OCI-LY7 (cell line): ENCODE measurements at regions of chr3 and their contacts with region 1.

Region 1: GRCh38 chr3:127590593-127591477 is at the start of gene TPRA1:
- DNase-seq: peak; percentile 98
- H3K4me3 ChIP-seq: peak within 1 kb of the TSS; percentile 85
- H3K27ac ChIP-seq: peak within 1 kb of the TSS; percentile 83
- H3K4me1 ChIP-seq: peaks cover 43% of the 10 kb centered on the region
- CTCF ChIP-seq: peak; percentile 57
- total RNA-seq, gene TPRA1: 25.6 and 32.3 TPM in 2 replicates

Region 2: DNA sequence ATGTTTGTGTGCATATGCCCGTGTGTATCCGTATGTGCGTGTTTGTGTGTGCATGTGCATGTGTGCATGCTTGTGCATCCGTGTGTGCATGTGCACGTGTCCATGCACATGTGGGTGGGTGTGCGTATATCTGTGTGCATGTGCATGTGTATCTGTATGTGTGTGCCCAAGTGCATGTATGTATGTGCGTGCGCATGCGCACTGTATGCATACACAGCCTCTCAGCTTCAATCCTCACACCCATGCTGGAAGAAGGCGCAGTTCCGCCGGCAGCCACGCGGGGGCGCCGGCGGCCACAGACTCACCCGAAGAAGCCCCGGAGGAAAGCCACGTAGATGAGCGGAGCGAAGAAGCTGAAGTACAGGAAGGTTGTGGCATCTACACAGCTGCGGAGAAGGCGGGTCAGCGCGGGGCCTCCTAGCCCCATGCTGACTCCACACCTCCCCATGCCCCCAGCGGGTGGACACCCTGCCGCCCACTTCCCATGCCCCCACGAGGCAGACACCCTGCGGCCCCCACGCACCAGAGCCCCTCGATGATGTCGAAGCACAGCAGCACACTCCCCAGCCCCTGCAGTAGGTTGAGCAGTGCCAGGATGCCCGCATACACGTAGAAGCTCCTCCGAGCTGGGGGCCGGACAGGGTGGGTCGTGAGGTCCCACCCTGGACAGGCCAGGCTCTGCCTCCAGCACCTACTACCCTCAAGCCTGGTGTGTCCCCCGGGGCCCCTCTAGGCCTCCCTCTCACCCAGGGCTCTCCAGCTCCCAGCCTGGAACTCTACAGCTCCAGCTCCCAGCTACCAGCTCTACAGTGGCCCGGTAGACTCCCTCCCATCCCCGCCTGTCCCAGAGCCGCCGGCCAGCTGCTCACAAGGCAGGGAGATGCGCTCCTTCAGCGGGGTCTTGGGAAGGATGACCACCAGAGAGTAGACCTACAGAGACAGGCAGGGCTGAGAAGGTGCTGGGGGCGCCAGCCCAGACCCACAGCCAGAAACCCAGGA is 15.7 kb before region 1 on chr3:
- CTCF ChIA-PET with region 1: no interaction called
- POLR2A ChIA-PET with region 1: no interaction called
- intact Hi-C with region 1: no loop called
- DNase-seq: peak; percentile 89
- H3K4me3 ChIP-seq: no peak overlapping the region
- H3K27ac ChIP-seq: no peak overlapping the region
- H3K4me1 ChIP-seq: no peaks in the 10 kb centered on the region
- CTCF ChIP-seq: peak; percentile 94

Region 3: GRCh38 chr3:128051837-128052594 is 461.2 kb after region 1 on chr3 and contains the start of gene SEC61A1:
- CTCF ChIA-PET with region 1: no interaction called
- POLR2A ChIA-PET with region 1: no interaction called
- intact Hi-C with region 1: loop called (anchors 5 kb)
- DNase-seq: peak; percentile 96
- H3K4me3 ChIP-seq: peak within 1 kb of the TSS; percentile 88
- H3K27ac ChIP-seq: peak within 1 kb of the TSS; percentile 57
- H3K4me1 ChIP-seq: peaks cover 31% of the 10 kb centered on the region
- CTCF ChIP-seq: no peak
- total RNA-seq, gene SEC61A1: 72.9 and 85.2 TPM in 2 replicates

Region 4: DNA sequence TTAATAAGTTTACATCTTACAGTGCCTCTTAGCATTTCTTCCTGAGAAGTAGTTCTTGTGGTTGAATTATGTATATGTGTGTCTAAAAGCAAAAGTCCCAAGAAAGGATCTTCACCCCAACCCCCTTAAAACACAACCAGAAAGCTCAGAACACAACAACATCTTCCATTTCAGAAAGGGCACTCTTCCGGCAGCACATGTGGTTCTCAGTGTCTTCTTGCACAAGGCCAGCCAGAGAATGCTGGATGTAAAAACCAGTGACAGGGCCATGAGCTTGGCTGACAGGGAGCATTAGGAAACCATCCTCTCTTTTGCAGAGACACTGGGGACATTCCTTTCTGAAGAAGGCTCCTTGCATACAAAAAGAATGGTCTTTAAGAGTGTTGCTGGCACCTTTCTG is 607.5 kb after region 1 on chr3:
- CTCF ChIA-PET with region 1: no interaction called
- POLR2A ChIA-PET with region 1: no interaction called
- intact Hi-C with region 1: no loop called
- DNase-seq: no peak
- H3K4me3 ChIP-seq: no peak overlapping the region
- H3K27ac ChIP-seq: no peak overlapping the region
- H3K4me1 ChIP-seq: peaks cover 5% of the 10 kb centered on the region
- CTCF ChIP-seq: no peak